Activated CD4-positive, alpha-beta memory T cell treated with anti-CD3 and anti-CD28 coated beads, Interleukin-2, amount 10 ng/mL, durations not matched to agents 7 days and 5 days (primary cell): ENCODE measurements at regions of chr1 and their contacts with region 1.

Region 1: GRCh38 chr1:155859234-155859829 is at the start of gene SYT11:
- DNase-seq: peak; percentile 94
- H3K4me3 Mint-ChIP-seq: peak within 1 kb of the TSS; percentile 85
- H3K27ac Mint-ChIP-seq: peak within 1 kb of the TSS; percentile 96
- H3K4me1 Mint-ChIP-seq: peaks cover 65% of the 10 kb centered on the region
- H3K27me3 Mint-ChIP-seq: no peaks in the 10 kb centered on the region
- total RNA-seq, gene SYT11: 30.7 to 31.6 TPM

Region 2: DNA sequence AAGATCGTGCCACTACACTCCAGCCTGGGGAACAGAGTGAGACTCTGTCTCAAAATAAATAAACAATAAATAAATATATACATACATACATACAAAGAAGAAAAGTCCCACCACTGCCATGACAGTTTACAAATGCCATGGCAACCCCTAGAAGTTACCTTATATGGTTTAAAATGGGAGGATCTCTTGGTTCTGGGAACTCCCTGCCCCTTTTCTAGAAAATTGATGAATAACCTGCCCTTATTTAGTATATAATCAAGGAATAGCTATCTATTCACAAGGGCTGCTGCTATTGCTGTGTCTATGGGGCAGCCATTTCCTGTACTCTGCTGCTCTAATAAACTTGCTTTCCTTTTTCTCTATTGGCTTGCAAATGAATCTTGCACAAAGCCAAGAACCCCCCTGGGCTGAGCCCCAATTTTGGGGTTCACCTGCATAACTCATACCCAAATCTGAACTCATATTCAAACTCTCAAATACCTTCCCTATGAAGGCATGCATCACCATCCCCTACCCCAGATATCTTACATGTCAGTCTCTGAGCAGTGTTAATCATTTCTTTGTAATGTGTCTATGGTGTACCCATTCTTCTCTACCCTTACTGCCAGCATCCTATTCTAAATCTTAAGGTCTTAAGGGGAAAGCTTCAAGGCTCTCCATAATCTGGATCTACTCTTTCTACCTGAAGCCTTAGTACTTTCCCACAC is 11.4 kb before region 1 on chr1:
- CTCF ChIA-PET with region 1: interaction called, 4 read pairs
- POLR2A ChIA-PET with region 1: interaction called, 30 read pairs
- DNase-seq: peak; percentile 21
- H3K4me3 Mint-ChIP-seq: peak overlapping the region; percentile 28
- H3K27ac Mint-ChIP-seq: peak overlapping the region; percentile 64
- H3K4me1 Mint-ChIP-seq: peaks cover 59% of the 10 kb centered on the region
- H3K27me3 Mint-ChIP-seq: no peaks in the 10 kb centered on the region

Region 3: DNA sequence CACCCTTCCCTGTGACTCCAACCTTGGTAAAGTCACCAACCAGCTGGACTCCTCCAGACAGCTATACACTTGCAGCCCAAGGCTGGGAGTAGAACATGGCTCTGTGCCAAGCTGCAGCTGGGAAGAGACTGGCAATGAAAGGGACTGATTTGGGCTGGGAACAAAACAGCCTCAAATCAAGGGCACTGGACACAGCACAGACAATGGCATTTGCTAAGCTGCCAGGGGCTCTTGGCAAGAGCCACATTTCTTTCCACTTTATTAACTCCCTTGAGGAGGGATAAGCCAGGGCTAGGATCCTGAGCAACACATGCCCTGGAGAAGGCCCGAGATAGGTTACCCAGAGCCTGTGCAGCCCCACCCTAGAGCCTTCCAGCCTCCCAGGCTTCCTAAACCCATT is 12.1 kb after region 1 on chr1:
- CTCF ChIA-PET with region 1: no interaction called
- POLR2A ChIA-PET with region 1: interaction called, 14 read pairs
- DNase-seq: no peak
- H3K4me3 Mint-ChIP-seq: no peak overlapping the region
- H3K27ac Mint-ChIP-seq: no peak overlapping the region
- H3K4me1 Mint-ChIP-seq: peaks cover 3% of the 10 kb centered on the region
- H3K27me3 Mint-ChIP-seq: no peaks in the 10 kb centered on the region